Calu3 (cell line): ENCODE measurements at regions of chr9 and their contacts with region 1.

Region 1: DNA sequence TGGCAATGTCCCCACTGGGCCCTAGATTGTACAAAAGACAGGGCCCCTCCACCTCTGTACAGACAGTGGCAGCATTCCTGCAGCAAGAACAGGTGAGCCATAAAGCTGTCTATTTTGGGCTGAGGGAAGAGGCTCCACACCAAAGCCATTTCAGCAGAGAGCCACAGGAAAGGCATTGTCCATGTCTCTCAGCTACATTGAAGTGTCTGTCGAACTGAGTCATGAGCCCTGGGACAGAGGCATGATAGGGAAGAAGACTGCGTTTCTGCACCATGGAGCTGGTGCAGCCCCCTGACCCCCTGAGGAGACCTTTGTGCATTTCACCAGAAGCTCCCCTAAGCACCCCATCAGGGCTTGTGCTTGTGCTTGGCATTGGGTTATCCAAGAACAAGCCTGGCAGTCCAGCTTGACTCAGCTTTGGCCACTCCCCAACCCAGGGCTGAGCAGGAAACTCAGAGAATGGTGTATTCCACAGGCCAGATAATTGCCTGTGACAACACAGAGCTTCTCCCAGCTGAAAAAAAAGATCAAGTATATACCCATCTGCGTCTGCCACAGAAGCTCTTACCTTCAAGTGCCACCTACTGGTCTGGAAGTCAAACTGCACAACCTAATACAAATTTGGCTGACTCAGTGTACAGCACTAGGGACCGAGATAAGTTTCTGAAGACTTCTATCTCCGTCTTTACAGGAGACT is 5.9 kb upstream of the FRMD3 start:
- DNase-seq: peak; percentile 13
- H3K4me3 Mint-ChIP-seq: no peak overlapping the region
- H3K27ac Mint-ChIP-seq: no peak overlapping the region
- H3K4me1 Mint-ChIP-seq: no peaks in the 10 kb centered on the region
- H3K27me3 Mint-ChIP-seq: no peaks in the 10 kb centered on the region
- CTCF ChIP-seq: peak; percentile 28

Region 2: GRCh38 chr9:82271106-82271561 is 1273.0 kb before region 1 on chr9:
- CTCF ChIA-PET with region 1: no interaction called
- intact Hi-C with region 1: no loop called
- DNase-seq: no peak
- H3K4me3 Mint-ChIP-seq: no peak overlapping the region
- H3K27ac Mint-ChIP-seq: no peak overlapping the region
- H3K4me1 Mint-ChIP-seq: no peaks in the 10 kb centered on the region
- H3K27me3 Mint-ChIP-seq: no peaks in the 10 kb centered on the region
- CTCF ChIP-seq: no peak

Region 3: GRCh38 chr9:83219152-83219923 is 324.8 kb before region 1 on chr9:
- CTCF ChIA-PET with region 1: interaction called, 40 read pairs
- intact Hi-C with region 1: loop called (anchors 1 kb)
- DNase-seq: peak; percentile 83
- H3K4me3 Mint-ChIP-seq: peak overlapping the region; percentile 88
- H3K27ac Mint-ChIP-seq: peak overlapping the region; percentile 82
- H3K4me1 Mint-ChIP-seq: peaks cover 9% of the 10 kb centered on the region
- H3K27me3 Mint-ChIP-seq: no peaks in the 10 kb centered on the region
- CTCF ChIP-seq: peak; percentile 25